HCT116 (cell line): ENCODE measurements at regions of chr13 and their contacts with region 1.

Region 1: DNA sequence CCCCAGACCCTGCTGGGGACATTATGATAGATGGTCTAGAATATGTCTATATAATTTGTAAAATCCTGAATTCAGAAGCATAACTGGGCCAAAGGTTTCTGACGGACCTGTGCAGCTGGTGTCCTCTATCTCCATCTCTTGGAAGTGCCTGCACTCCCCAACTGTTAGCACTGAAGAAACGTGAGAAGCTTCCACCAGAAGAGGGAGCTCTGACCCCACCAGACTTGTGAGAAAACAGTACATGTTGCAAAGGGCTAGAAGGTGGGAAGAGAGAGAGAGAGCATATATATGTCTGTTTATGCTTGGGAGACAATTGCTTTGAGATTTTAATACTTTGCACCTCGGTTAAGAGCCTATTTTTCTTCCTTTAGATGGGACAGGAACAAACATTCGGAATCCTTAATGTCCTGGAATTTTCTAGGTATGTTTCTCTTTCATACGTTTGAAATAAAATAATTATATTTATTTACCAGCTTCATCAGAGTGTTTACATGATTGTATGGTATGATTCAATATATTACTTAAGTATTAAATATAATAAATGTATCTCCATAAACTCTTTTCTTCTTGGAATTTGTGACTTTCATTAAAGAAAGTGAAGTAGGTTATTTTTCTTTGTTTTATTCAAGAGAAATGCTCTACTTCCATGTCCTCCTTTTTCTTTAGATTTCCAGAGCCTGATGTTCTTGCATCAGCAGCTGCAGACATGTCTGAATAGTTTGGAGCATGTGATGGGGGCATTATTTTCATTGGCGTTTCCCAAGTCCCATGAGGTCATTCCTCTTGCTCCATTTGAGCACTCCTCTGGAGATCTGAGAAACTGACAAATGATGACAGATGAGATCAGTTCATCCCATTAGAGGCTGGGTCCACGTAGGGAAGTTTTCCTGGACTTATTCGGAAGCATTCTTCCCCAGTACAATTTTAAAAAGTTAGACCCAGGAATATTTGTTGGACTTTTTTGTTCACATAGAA is 202.9 kb downstream of the ATP8A2 start:
- DNase-seq: peak; percentile 73
- ATAC-seq: peak; percentile 99
- H3K4me3 ChIP-seq: no peak overlapping the region
- H3K27ac ChIP-seq: no peak overlapping the region
- H3K4me1 ChIP-seq: no peaks in the 10 kb centered on the region
- H3K27me3 ChIP-seq: peaks cover 60% of the 10 kb centered on the region
- CTCF ChIP-seq: peak; percentile 71 to 91 (median 90)
- POLR2A ChIP-seq: no peak
- RAD21 ChIP-seq: peak; percentile 75

Region 2: DNA sequence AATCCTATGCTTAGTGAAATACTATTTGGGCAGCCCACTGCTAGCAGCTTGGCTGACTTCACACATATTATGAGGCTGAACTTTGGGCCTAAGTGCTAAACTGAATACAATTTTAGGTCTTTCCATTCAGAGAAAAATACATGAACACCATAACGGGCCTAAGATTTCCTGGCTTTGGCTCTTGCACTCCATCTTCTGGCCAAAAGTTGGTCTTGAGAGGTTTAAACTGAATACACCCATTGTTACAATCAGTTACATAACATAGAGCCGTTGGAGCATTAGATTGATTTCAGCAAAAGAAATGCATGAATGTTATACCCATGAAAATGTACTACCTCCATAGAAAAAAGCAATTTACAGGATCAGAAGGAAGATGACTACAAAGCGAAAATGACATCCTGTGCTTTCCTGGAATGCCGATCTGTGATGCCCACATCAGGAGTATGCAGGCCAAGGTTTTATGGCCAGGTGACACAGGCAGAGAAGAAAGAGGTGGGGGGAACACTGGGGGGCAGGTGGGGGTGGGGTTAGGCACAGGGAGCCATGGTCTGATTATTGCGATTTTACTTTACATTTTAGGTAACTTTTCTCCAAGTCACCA is 488.2 kb after region 1 on chr13:
- CTCF ChIA-PET with region 1: interaction called, 6 read pairs
- POLR2A ChIA-PET with region 1: no interaction called
- RAD21 ChIA-PET with region 1: no interaction called
- intact Hi-C with region 1: loop called (anchors 2 kb)
- DNase-seq: peak; percentile 31
- ATAC-seq: peak; percentile 81
- H3K4me3 ChIP-seq: no peak overlapping the region
- H3K27ac ChIP-seq: no peak overlapping the region
- H3K4me1 ChIP-seq: no peaks in the 10 kb centered on the region
- H3K27me3 ChIP-seq: peaks cover 39% of the 10 kb centered on the region
- CTCF ChIP-seq: peak; percentile 33 to 73 (median 67); a peak in 4 of 6 replicates
- POLR2A ChIP-seq: no peak
- RAD21 ChIP-seq: peak; percentile 53

Region 3: DNA sequence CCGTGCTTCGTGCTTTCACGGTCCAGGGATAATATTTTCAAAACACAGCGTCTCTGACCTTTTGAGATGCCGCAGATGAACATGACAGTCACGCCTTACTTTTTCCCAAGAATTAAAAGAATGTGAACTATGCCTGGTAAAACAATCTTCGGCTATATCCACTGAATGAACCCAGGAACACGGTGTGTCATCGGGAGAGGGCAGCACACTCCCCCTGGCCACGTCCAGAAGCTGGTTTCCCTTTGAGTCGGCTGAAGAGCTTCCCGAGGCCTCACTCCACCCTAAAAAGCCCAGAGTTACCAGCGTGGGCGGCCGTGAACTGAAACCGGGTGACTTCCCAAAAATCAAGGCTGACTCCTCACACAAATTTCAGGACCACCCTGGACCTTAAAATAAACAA is 500.0 kb after region 1 on chr13:
- CTCF ChIA-PET with region 1: interaction called, 10 read pairs
- POLR2A ChIA-PET with region 1: no interaction called
- RAD21 ChIA-PET with region 1: no interaction called
- intact Hi-C with region 1: loop called (anchors 1 kb)
- DNase-seq: no peak
- ATAC-seq: peak; percentile 62; the same call in 1 of the 2 replicates
- H3K4me3 ChIP-seq: no peak overlapping the region
- H3K27ac ChIP-seq: no peak overlapping the region
- H3K4me1 ChIP-seq: peaks cover 0 to 4% of the 10 kb centered on the region in 2 experiments; a peak in 1 of 4 replicates
- H3K27me3 ChIP-seq: peaks cover 22% of the 10 kb centered on the region
- CTCF ChIP-seq: no peak
- POLR2A ChIP-seq: no peak
- RAD21 ChIP-seq: no peak

Region 4: GRCh38 chr13:26498656-26499591 is 924.2 kb after region 1 on chr13:
- CTCF ChIA-PET with region 1: no interaction called
- POLR2A ChIA-PET with region 1: no interaction called
- RAD21 ChIA-PET with region 1: no interaction called
- intact Hi-C with region 1: loop called (anchors 10 kb)
- DNase-seq: no peak
- ATAC-seq: no peak
- H3K4me3 ChIP-seq: no peak overlapping the region
- H3K27ac ChIP-seq: no peak overlapping the region
- H3K4me1 ChIP-seq: no peaks in the 10 kb centered on the region
- H3K27me3 ChIP-seq: no peaks in the 10 kb centered on the region
- CTCF ChIP-seq: no peak
- POLR2A ChIP-seq: no peak
- RAD21 ChIP-seq: 0 out of 2 replicates have a peak, but pooled peaks have one; percentile 4

Region 5: GRCh38 chr13:26707122-26708006 is 1132.6 kb after region 1 on chr13:
- CTCF ChIA-PET with region 1: no interaction called
- POLR2A ChIA-PET with region 1: no interaction called
- RAD21 ChIA-PET with region 1: no interaction called
- intact Hi-C with region 1: loop called (anchors 10 kb)
- DNase-seq: peak; percentile 27
- ATAC-seq: peak; percentile 89
- H3K4me3 ChIP-seq: no peak overlapping the region
- H3K27ac ChIP-seq: no peak overlapping the region
- H3K4me1 ChIP-seq: no peaks in the 10 kb centered on the region
- H3K27me3 ChIP-seq: peaks cover 21% of the 10 kb centered on the region
- CTCF ChIP-seq: peak; percentile 51 to 66 (median 62); a peak in 5 of 6 replicates
- POLR2A ChIP-seq: no peak
- RAD21 ChIP-seq: peak; percentile 66